Calu3 (cell line): ENCODE measurements at regions of chr5 and their contacts with region 1.

Region 1: DNA sequence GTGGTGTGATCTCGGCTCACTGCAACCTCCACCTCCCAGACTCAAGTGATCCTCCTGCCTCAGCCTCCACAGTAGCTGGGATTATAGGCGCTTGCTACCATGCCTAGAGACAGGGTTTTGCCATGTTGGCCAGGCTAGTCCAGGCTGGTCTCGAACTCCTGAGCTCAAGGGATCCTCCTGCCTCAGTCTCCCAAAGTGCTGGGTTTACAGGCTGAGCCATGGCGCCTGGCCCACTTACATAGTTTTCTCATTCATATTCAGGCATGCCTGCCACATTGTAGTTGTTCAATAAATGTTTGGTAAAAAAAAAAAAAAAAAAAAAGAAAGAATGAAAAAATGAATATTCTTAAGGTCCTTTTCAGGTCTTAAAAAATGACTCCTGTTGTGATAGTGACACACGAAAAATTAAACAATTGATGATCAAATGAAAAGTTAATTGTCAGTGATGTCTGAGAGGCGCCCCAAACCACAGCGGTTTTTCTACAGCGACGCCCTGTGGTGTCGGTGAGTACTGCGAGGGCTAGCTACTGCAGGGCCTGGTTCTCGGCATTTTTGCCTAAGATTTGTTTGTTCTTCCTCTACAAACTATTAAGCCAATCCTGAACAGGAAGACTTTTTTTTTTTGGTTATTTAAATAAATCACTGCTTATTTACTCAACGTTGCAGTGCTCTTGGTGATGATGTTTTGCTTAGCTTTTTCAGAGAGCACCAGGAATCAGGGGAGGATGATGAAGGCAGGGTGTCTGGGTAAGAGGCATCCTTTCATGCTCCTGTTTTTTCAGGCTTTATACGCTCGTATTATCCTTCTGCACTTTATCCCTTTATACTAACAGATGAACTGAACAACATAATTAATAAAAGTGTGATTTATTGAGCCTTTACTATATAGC is 67.0 kb upstream of the DPYSL3 start:
- DNase-seq: peak; percentile 81
- H3K4me3 Mint-ChIP-seq: no peak overlapping the region
- H3K27ac Mint-ChIP-seq: no peak overlapping the region
- H3K4me1 Mint-ChIP-seq: no peaks in the 10 kb centered on the region
- H3K27me3 Mint-ChIP-seq: no peaks in the 10 kb centered on the region
- CTCF ChIP-seq: peak; percentile 86

Region 2: GRCh38 chr5:147223948-147224791 is 352.7 kb before region 1 on chr5:
- CTCF ChIA-PET with region 1: interaction called, 7 read pairs
- intact Hi-C with region 1: loop called (anchors 5 kb)
- DNase-seq: peak; percentile 75
- H3K4me3 Mint-ChIP-seq: no peak overlapping the region
- H3K27ac Mint-ChIP-seq: no peak overlapping the region
- H3K4me1 Mint-ChIP-seq: peaks cover 10% of the 10 kb centered on the region
- H3K27me3 Mint-ChIP-seq: no peaks in the 10 kb centered on the region
- CTCF ChIP-seq: peak; percentile 69

Region 3: DNA sequence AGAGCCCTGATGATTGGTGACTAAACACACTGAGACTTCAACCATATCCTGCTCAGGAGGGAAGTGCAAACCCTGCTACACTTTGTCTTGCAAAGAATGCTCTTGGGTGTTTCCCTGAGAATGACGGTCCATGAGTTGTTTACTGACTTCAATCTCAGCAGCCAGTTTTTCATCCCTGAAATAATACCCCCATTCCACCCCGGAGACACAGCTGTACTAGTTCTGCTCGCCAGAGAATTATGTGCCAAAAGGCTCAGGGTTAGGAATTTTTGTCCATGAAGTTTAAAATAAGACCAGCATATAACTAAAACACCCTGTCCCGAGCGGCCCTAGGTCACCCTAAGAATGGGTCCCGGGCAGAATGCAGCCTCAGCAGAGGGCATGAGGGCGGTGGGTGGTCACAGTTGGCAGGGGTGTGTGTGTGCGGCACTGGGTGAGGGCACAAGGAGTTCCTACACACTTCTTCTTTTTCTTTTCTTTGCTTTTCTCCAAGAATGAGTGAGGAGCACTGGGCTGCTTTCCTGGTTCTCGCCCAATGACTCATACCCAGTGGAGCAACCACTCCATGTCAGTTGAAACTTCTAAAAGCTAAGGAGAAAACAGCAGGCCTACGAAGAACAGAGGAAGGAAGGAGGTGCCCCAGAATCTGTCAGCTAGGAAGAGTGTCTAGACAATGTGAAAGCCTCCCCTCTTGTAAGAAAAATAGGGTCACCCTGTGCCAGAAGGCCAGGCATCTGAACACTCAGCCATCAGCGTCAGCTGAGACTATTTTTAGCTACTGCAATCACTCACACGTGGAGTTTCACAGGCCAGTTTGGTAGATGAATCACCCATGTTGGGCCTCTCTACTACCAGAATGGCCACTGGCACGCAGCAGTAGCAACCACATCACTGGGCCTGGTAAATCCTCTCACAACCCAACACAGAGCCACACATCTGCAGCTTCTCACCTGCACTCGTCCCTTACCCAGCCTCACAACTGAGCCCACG is 172.9 kb before region 1 on chr5:
- CTCF ChIA-PET with region 1: interaction called, 6 read pairs
- intact Hi-C with region 1: loop called (anchors 5 kb)
- DNase-seq: peak; percentile 51
- H3K4me3 Mint-ChIP-seq: peak overlapping the region; percentile 28
- H3K27ac Mint-ChIP-seq: peak overlapping the region; percentile 89
- H3K4me1 Mint-ChIP-seq: peaks cover 17% of the 10 kb centered on the region
- H3K27me3 Mint-ChIP-seq: no peaks in the 10 kb centered on the region
- CTCF ChIP-seq: no peak

Region 4: DNA sequence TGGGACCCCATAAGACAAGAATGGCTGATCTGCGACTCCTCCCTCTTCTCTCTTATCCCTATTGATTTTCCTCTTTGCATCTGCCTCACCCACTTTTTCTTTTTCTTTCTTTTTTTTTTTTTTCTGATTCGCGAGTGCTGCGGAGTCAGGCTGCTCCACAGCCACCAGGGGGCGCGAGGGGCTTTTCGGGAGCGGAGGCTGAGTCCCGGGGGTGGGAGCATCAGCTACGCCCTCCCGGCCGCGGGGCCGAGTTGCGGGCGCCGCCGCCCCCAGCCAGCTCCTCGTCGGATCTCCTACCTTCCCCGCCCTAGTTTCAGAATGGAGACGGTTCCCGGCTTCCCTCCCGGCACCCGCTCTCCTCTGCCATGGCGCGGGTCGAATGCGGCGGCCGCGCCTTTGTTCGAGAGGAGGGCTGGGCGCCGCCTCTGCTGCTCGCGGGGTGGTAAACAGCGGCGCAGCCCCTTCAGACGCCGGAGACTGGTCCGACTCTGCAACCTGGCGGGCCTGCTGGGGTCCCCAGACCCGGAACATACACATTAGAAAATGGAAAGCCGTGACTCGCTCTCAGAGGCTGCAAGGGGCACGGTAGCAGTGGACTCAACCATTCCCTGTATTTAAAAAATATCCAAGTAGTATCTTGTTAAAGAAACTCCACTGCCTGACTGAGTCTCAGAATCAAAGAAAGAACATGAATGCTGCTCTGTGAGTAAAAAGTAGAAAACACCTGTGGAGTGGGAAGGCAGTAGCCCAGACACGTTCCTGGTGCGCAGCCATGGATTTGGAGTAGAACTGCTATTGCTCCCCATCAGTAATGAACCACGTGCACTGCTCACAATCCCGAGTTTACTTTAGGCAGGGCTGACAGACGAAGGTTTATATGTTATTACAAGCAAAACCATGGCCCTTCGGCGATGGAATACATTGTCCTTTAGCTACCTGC is 122.7 kb before region 1 on chr5:
- CTCF ChIA-PET with region 1: interaction called, 22 read pairs
- intact Hi-C with region 1: loop called (anchors 2 kb)
- DNase-seq: peak; percentile 95
- H3K4me3 Mint-ChIP-seq: peak overlapping the region; percentile 92
- H3K27ac Mint-ChIP-seq: peak overlapping the region; percentile 0
- H3K4me1 Mint-ChIP-seq: peaks cover 8% of the 10 kb centered on the region
- H3K27me3 Mint-ChIP-seq: peaks cover 21% of the 10 kb centered on the region
- CTCF ChIP-seq: peak; percentile 96

Region 5: GRCh38 chr5:147464211-147464610 is 112.7 kb before region 1 on chr5:
- CTCF ChIA-PET with region 1: interaction called, 15 read pairs
- intact Hi-C with region 1: loop called (anchors 2 kb)
- DNase-seq: peak; percentile 65
- H3K4me3 Mint-ChIP-seq: no peak overlapping the region
- H3K27ac Mint-ChIP-seq: no peak overlapping the region
- H3K4me1 Mint-ChIP-seq: no peaks in the 10 kb centered on the region
- H3K27me3 Mint-ChIP-seq: no peaks in the 10 kb centered on the region
- CTCF ChIP-seq: peak; percentile 76

Region 6: GRCh38 chr5:147504011-147504410 is 72.9 kb before region 1 on chr5:
- CTCF ChIA-PET with region 1: interaction called, 12 read pairs
- intact Hi-C with region 1: no loop called
- DNase-seq: no peak
- H3K4me3 Mint-ChIP-seq: no peak overlapping the region
- H3K27ac Mint-ChIP-seq: no peak overlapping the region
- H3K4me1 Mint-ChIP-seq: peaks cover 19% of the 10 kb centered on the region
- H3K27me3 Mint-ChIP-seq: no peaks in the 10 kb centered on the region
- CTCF ChIP-seq: no peak

Region 7: GRCh38 chr5:147509710-147510651 is 66.9 kb before region 1 on chr5 and contains the start of gene DPYSL3:
- CTCF ChIA-PET with region 1: interaction called, 10 read pairs
- intact Hi-C with region 1: no loop called
- DNase-seq: peak; percentile 82
- H3K4me3 Mint-ChIP-seq: peak within 1 kb of the TSS; percentile 99
- H3K27ac Mint-ChIP-seq: peak within 1 kb of the TSS; percentile 62
- H3K4me1 Mint-ChIP-seq: peaks cover 36% of the 10 kb centered on the region
- H3K27me3 Mint-ChIP-seq: no peaks in the 10 kb centered on the region
- CTCF ChIP-seq: peak; percentile 33
- total RNA-seq, gene DPYSL3: 21.4 and 26.6 TPM in 2 replicates

Region 8: DNA sequence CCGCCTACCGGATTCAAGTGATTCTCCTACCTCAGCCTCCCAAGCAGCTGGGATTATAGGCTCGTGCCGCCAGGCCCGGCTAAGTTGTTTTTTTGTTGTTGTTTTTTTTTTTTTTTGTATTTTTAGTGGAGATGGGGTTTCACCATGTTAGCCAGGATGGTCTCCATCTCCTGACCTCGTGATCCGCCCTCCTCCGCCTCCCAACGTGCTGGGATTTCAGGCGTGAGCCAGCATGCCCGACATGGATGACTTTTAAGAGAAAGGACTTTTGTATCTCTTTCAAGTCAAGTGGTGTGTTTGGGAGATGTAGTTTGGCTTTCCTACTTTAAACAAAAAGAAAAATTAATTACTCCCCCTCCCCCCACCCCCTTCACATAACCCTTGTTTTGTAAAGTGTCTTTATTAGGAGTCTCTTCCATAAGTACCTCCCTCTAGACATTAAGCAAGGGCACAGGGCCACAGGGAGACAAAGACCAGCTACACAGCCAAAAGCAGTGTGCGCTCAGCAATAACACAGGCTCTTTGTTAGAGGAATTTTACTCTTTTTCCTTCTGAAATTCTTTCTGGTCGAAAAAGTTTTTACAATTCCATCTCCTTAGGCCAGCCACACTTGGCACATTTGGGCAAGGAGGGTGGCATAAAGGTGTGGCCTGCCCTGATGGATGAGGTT is 174.4 kb after region 1 on chr5:
- CTCF ChIA-PET with region 1: no interaction called
- intact Hi-C with region 1: no loop called
- DNase-seq: no peak
- H3K4me3 Mint-ChIP-seq: no peak overlapping the region
- H3K27ac Mint-ChIP-seq: no peak overlapping the region
- H3K4me1 Mint-ChIP-seq: no peaks in the 10 kb centered on the region
- H3K27me3 Mint-ChIP-seq: no peaks in the 10 kb centered on the region
- CTCF ChIP-seq: no peak

Region 9: GRCh38 chr5:148090773-148091221 is 513.9 kb after region 1 on chr5:
- CTCF ChIA-PET with region 1: no interaction called
- intact Hi-C with region 1: no loop called
- DNase-seq: peak; percentile 12
- H3K4me3 Mint-ChIP-seq: peak overlapping the region; percentile 70
- H3K27ac Mint-ChIP-seq: peak overlapping the region; percentile 96
- H3K4me1 Mint-ChIP-seq: peaks cover 45% of the 10 kb centered on the region
- H3K27me3 Mint-ChIP-seq: no peaks in the 10 kb centered on the region
- CTCF ChIP-seq: no peak